A549 (cell line): ENCODE measurements at regions of chr15 and their contacts with region 1.

Region 1: DNA sequence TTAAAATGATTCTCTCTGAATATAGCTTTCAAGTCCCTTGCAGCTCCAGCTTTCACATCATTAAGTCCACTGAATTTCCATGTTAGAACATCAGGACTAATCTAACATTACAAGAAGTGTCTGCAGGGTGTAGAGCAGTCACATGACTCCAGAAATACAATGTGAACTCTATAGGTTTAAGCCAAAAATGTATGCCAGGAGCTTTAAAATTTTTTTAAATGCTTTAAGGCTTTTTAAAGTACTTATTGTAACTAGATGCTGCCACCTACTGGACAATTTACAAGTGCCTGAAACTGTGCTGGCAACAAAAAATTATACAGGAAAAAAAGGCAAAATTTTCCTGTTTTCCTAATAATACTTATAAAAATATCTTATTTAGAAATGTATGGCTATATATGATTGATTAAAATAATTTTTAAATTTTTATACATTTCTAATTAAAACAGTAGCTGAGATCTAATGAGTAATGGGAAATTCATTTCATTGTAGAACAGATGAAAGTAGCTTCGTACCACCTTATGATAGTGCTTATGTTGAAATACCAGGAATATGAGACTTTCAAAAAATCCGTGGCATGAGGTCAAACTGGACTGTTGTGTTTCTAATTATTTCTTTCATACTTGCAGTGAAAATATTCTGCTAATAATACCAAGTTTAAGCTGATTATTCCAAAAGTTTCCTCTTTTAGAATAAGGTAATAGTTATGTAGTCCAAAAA is 25.7 kb downstream of the FSIP1 start:
- DNase-seq: peak in 1 of 2 experiments; percentile 65
- ATAC-seq: no peak
- H3K4me3 ChIP-seq: no peak overlapping the region
- H3K27ac ChIP-seq: peak overlapping the region in 1 of 2 experiments; percentile 45; a peak in 1 of 6 replicates
- H3K4me1 ChIP-seq: no peaks in the 10 kb centered on the region
- CTCF ChIP-seq: peak; percentile 83
- EP300 ChIP-seq: no peak
- POLR2A ChIP-seq: no peak
- RAD21 ChIP-seq: peak; percentile 75 to 89

Region 2: GRCh38 chr15:38699633-38700230 is 1057.2 kb before region 1 on chr15:
- CTCF ChIA-PET with region 1: interaction called, 17 read pairs
- POLR2A ChIA-PET with region 1: no interaction called
- DNase-seq: peak; percentile 50 to 61
- ATAC-seq: peak; percentile 68 to 80; a peak in 3 of 6 replicates
- H3K4me3 ChIP-seq: no peak overlapping the region
- H3K27ac ChIP-seq: no peak overlapping the region
- H3K4me1 ChIP-seq: peaks cover 9% of the 10 kb centered on the region; the same call in 2 of the 3 replicates
- CTCF ChIP-seq: peak; percentile 53
- EP300 ChIP-seq: no peak
- POLR2A ChIP-seq: no peak
- RAD21 ChIP-seq: peak; percentile 51 to 54; a peak in 4 of 5 replicates

Region 3: GRCh38 chr15:38707802-38708671 is 1048.9 kb before region 1 on chr15:
- CTCF ChIA-PET with region 1: interaction called, 20 read pairs
- POLR2A ChIA-PET with region 1: no interaction called
- DNase-seq: peak; percentile 25 to 57
- ATAC-seq: peak; percentile 84 to 91
- H3K4me3 ChIP-seq: no peak overlapping the region
- H3K27ac ChIP-seq: 0 out of 6 replicates have a peak overlapping the region, but pooled peaks of 1 of the 2 experiments have one; percentile 16
- H3K4me1 ChIP-seq: peaks cover 6% of the 10 kb centered on the region; the same call in 2 of the 3 replicates
- CTCF ChIP-seq: peak; percentile 81
- EP300 ChIP-seq: no peak
- POLR2A ChIP-seq: no peak
- RAD21 ChIP-seq: peak; percentile 84 to 92

Region 4: GRCh38 chr15:39171944-39172368 is 585.0 kb before region 1 on chr15:
- CTCF ChIA-PET with region 1: interaction called, 21 read pairs
- POLR2A ChIA-PET with region 1: no interaction called
- DNase-seq: peak; percentile 74 to 93
- ATAC-seq: peak; percentile 99 to 100
- H3K4me3 ChIP-seq: no peak overlapping the region
- H3K27ac ChIP-seq: peak overlapping the region; percentile 69 to 80
- H3K4me1 ChIP-seq: peaks cover 17% of the 10 kb centered on the region
- CTCF ChIP-seq: peak; percentile 66
- EP300 ChIP-seq: no peak
- POLR2A ChIP-seq: no peak
- RAD21 ChIP-seq: peak; percentile 94 to 97

Region 5: GRCh38 chr15:39686000-39686613 is 70.9 kb before region 1 on chr15:
- CTCF ChIA-PET with region 1: interaction called, 63 read pairs
- POLR2A ChIA-PET with region 1: interaction called, 4 read pairs
- DNase-seq: peak; percentile 4 to 56
- ATAC-seq: peak in 1 of 2 experiments; percentile 72; a peak in 2 of 6 replicates
- H3K4me3 ChIP-seq: no peak overlapping the region
- H3K27ac ChIP-seq: no peak overlapping the region
- H3K4me1 ChIP-seq: no peaks in the 10 kb centered on the region
- CTCF ChIP-seq: peak; percentile 80
- EP300 ChIP-seq: no peak
- POLR2A ChIP-seq: no peak
- RAD21 ChIP-seq: peak; percentile 81 to 90

Region 6: GRCh38 chr15:39767921-39768320 is 11.0 kb after region 1 on chr15:
- CTCF ChIA-PET with region 1: interaction called, 19 read pairs
- POLR2A ChIA-PET with region 1: no interaction called
- DNase-seq: no peak
- ATAC-seq: no peak
- H3K4me3 ChIP-seq: no peak overlapping the region
- H3K27ac ChIP-seq: no peak overlapping the region
- H3K4me1 ChIP-seq: no peaks in the 10 kb centered on the region
- CTCF ChIP-seq: no peak
- EP300 ChIP-seq: no peak
- POLR2A ChIP-seq: no peak
- RAD21 ChIP-seq: no peak

Region 7: DNA sequence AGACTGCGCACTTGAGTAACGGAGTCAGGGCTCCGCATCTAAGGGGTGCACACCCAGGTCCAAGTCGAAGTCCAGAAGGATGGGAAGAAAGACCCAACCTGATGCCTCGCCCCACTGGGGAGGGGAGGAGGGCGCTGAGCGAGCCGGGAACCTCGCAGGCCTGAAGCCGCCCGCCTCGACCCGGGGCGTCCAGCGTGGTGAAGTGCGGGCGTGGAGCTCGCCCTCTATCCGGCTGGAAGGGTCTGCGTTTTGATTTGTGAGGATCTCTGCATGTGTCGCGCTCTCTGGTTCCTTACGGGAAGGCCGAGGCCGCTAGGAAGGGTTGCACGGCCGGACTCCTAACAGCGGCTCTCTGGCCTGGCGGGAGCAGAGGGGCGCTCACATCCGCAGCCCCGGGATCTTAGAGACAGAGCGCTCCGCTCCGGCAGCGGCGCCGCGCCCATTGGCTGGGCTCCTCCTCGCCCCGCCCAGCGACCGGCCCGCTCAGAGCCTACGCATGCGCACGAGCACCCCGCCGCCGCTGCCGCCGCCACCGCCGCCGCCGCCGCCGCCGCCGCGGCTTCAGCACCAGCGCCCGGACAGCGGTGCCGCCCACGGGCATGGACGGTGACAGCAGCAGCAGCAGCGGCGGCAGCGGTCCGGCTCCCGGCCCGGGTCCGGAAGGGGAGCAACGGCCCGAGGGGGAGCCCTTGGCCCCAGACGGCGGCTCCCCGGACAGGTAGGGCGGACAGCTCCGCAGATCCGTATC is 600.9 kb after region 1 on chr15 and contains the start of gene DISP2:
- CTCF ChIA-PET with region 1: no interaction called
- POLR2A ChIA-PET with region 1: no interaction called
- DNase-seq: peak; percentile 69 to 83
- ATAC-seq: peak; percentile 79 to 89
- H3K4me3 ChIP-seq: peak within 1 kb of the TSS; percentile 57
- H3K27ac ChIP-seq: peak within 1 kb of the TSS in 1 of 2 experiments; percentile 77; a peak in 2 of 6 replicates
- H3K4me1 ChIP-seq: peaks cover 6% of the 10 kb centered on the region; the same call in 1 of the 3 replicates
- CTCF ChIP-seq: no peak
- EP300 ChIP-seq: no peak
- POLR2A ChIP-seq: no peak
- RAD21 ChIP-seq: no peak
- polyA plus RNA-seq, gene DISP2: 0.26 and 0.52 TPM in 2 replicates